ENCODE measurements at regions of chr7 and their contacts with region 1.

Region 1: GRCh38 chr7:108146070-108146837 is 16.1 kb upstream of the LAMB4 start:
- DNase-seq: peak; percentile 69
- H3K4me3 ChIP-seq: no peak overlapping the region
- H3K27ac ChIP-seq: peak overlapping the region in 1 of 2 experiments; percentile 40; a peak in 1 of 4 replicates
- H3K4me1 ChIP-seq: peaks cover 0 to 6% of the 10 kb centered on the region in 2 experiments; a peak in 1 of 4 replicates
- H3K27me3 ChIP-seq: no peaks in the 10 kb centered on the region
- CTCF ChIP-seq: peak; percentile 100
- EP300 ChIP-seq: peak in 1 of 2 experiments; percentile 50; a peak in 1 of 4 replicates
- RAD21 ChIP-seq: peak; percentile 100

Region 2: GRCh38 chr7:107743567-107744344 is 402.5 kb before region 1 on chr7 and contains the start of gene CBLL1:
- CTCF ChIA-PET with region 1: interaction called, 16 read pairs
- POLR2A ChIA-PET with region 1: no interaction called
- DNase-seq: peak; percentile 97
- H3K4me3 ChIP-seq: peak within 1 kb of the TSS; percentile 96 to 100
- H3K27ac ChIP-seq: peak within 1 kb of the TSS; percentile 98 to 100
- H3K4me1 ChIP-seq: peaks cover 7 to 20% of the 10 kb centered on the region in 2 experiments; a peak in 3 of 4 replicates
- H3K27me3 ChIP-seq: no peaks in the 10 kb centered on the region
- CTCF ChIP-seq: peak; percentile 93
- EP300 ChIP-seq: peak in 1 of 2 experiments; percentile 59; a peak in 2 of 4 replicates
- RAD21 ChIP-seq: peak; percentile 69
- polyA plus RNA-seq, gene CBLL1: 26.0 and 28.8 TPM in 2 replicates

Region 3: GRCh38 chr7:107961405-107961804 is 184.8 kb before region 1 on chr7:
- CTCF ChIA-PET with region 1: interaction called, 28 read pairs
- POLR2A ChIA-PET with region 1: no interaction called
- DNase-seq: no peak
- H3K4me3 ChIP-seq: no peak overlapping the region
- H3K27ac ChIP-seq: no peak overlapping the region; a peak in 1 of 4 replicates
- H3K4me1 ChIP-seq: no peaks in the 10 kb centered on the region
- H3K27me3 ChIP-seq: no peaks in the 10 kb centered on the region
- CTCF ChIP-seq: no peak
- EP300 ChIP-seq: no peak
- RAD21 ChIP-seq: no peak

Region 4: GRCh38 chr7:107995184-107996071 is 150.8 kb before region 1 on chr7:
- CTCF ChIA-PET with region 1: interaction called, 19 read pairs
- POLR2A ChIA-PET with region 1: no interaction called
- DNase-seq: peak; percentile 50
- H3K4me3 ChIP-seq: 0 out of 4 replicates have a peak overlapping the region, but pooled peaks of 1 of the 2 experiments have one; percentile 1
- H3K27ac ChIP-seq: peak overlapping the region; percentile 93
- H3K4me1 ChIP-seq: peaks cover 56 to 65% of the 10 kb centered on the region in 2 experiments
- H3K27me3 ChIP-seq: no peaks in the 10 kb centered on the region
- CTCF ChIP-seq: no peak
- EP300 ChIP-seq: peak; percentile 36 to 67; a peak in 3 of 4 replicates
- RAD21 ChIP-seq: no peak

Region 5: GRCh38 chr7:108103558-108104298 is 42.5 kb before region 1 on chr7:
- CTCF ChIA-PET with region 1: interaction called, 43 read pairs
- POLR2A ChIA-PET with region 1: no interaction called
- DNase-seq: peak; percentile 34
- H3K4me3 ChIP-seq: no peak overlapping the region
- H3K27ac ChIP-seq: no peak overlapping the region
- H3K4me1 ChIP-seq: peaks cover 0 to 4% of the 10 kb centered on the region in 2 experiments; a peak in 1 of 4 replicates
- H3K27me3 ChIP-seq: no peaks in the 10 kb centered on the region
- CTCF ChIP-seq: no peak
- EP300 ChIP-seq: no peak
- RAD21 ChIP-seq: no peak

Region 6: DNA sequence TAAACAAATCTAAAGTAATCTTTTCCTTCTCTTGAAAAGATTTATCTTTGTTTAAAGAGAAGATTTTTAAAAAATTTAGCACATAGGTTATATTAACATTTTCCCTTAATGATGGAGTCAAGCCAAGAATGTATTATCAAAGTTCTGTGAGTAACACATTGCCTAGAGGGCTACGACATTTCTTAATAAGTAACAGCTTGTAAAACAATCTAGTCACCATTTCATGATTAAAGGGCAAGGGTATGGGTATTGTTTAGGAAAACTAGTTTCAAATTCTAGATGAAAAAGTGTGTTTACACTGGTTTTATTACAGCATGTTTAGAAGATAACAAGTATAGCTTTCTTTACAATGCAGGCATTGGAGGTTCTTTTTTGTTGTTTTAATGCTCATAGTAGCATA is 12.5 kb after region 1 on chr7:
- CTCF ChIA-PET with region 1: interaction called, 30 read pairs
- POLR2A ChIA-PET with region 1: no interaction called
- DNase-seq: no peak
- H3K4me3 ChIP-seq: no peak overlapping the region
- H3K27ac ChIP-seq: no peak overlapping the region; a peak in 1 of 4 replicates
- H3K4me1 ChIP-seq: no peaks in the 10 kb centered on the region; a peak in 1 of 4 replicates
- H3K27me3 ChIP-seq: no peaks in the 10 kb centered on the region; the same call in 1 of the 2 replicates
- CTCF ChIP-seq: no peak
- EP300 ChIP-seq: no peak
- RAD21 ChIP-seq: no peak

Region 7: DNA sequence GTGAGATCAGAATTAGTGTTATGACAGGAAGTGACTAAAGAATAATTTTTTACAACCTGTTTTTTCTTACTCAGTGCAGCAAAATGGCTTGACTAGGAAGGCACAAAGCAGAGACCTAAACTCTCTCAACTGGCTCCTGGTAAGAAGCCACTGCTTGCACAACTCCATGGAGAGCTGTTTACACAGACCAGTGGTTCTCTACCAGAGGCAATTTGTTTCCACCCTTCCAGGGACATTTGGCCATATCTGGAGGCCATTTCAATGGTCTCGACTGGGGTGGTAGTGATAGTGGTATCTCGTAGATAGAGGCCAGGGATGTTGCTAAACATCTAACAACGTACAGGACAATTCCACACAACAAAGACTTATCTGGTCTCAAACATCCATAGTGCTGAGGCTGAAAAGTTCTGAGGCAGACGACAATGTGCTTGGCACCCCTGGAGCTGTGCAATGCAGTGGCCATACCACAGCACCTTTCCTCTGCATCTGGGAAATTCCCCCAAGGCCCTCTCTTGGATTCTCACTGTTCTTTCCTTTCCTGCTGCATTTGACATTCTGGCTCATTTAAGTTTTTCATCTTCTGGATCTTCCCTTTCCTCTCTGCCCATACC is 89.3 kb after region 1 on chr7:
- CTCF ChIA-PET with region 1: no interaction called
- POLR2A ChIA-PET with region 1: no interaction called
- DNase-seq: no peak
- H3K4me3 ChIP-seq: no peak overlapping the region
- H3K27ac ChIP-seq: peak overlapping the region; percentile 31 to 79; a peak in 3 of 4 replicates
- H3K4me1 ChIP-seq: peaks cover 31 to 43% of the 10 kb centered on the region in 2 experiments; a peak in 3 of 4 replicates
- H3K27me3 ChIP-seq: no peaks in the 10 kb centered on the region
- CTCF ChIP-seq: no peak
- EP300 ChIP-seq: no peak
- RAD21 ChIP-seq: no peak